T-cell (primary cell): ENCODE measurements at regions of chr3 and their contacts with region 1.

Region 1: DNA sequence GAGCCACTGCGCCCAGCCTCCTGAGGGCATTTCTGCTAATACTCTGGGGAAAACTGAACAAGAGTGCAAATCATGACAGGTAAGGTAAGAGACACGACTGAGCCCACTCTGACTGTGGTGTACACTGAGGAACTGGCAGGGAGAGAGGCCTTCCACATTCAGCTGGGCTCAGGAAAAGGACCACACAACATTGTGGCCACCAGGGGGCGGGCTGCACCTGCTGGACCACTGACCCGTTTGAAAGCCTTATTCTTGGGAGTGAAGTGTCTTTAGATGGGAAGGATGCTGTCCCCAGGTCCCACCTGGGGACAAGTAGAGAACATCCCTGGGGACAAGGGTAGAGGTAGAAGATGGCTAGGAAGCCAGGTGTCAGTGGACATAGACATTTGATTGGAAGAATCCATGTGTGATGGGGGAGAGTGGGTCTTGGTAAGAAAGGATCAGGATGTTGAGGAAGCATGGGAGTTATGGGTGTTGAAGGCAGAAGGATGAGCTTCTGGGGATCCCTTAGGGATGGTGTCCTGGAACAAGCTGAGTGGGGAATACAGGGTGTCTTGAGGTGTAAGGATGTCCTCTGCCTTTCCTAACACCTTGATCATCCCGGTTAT is 6.2 kb upstream of the CTDSPL start:
- DNase-seq: peak; percentile 13 to 80 (median 62)
- ATAC-seq: peak in 3 of 4 experiments; percentile 25 to 48 (median 35)
- H3K4me3 ChIP-seq: no peak overlapping the region
- H3K4me3 Mint-ChIP-seq: no peak overlapping the region
- H3K27ac ChIP-seq: no peak overlapping the region
- H3K27ac Mint-ChIP-seq: no peak overlapping the region
- H3K4me1 ChIP-seq: peaks cover 3 to 8% of the 10 kb centered on the region in 2 experiments
- H3K4me1 Mint-ChIP-seq: peaks cover 7 to 9% (median 9%) of the 10 kb centered on the region in 3 donors
- H3K27me3 ChIP-seq: peaks cover 0 to 21% of the 10 kb centered on the region in 2 experiments
- H3K27me3 Mint-ChIP-seq: no peaks in the 10 kb centered on the region

Region 2: GRCh38 chr3:37943631-37944309 is 88.3 kb after region 1 on chr3:
- CTCF ChIA-PET with region 1: interaction called in 1 of 2 experiments, 14 read pairs
- POLR2A ChIA-PET with region 1: no interaction called
- DNase-seq: no peak
- ATAC-seq: no peak
- H3K4me3 ChIP-seq: no peak overlapping the region
- H3K4me3 Mint-ChIP-seq: no peak overlapping the region
- H3K27ac ChIP-seq: no peak overlapping the region
- H3K27ac Mint-ChIP-seq: no peak overlapping the region
- H3K4me1 ChIP-seq: no peaks in the 10 kb centered on the region
- H3K4me1 Mint-ChIP-seq: peaks cover 0 to 6% (median 0%) of the 10 kb centered on the region in 3 donors
- H3K27me3 ChIP-seq: peaks cover 0 to 6% of the 10 kb centered on the region in 2 experiments
- H3K27me3 Mint-ChIP-seq: peaks cover 0 to 3% of the 10 kb centered on the region in 2 donors

Region 3: DNA sequence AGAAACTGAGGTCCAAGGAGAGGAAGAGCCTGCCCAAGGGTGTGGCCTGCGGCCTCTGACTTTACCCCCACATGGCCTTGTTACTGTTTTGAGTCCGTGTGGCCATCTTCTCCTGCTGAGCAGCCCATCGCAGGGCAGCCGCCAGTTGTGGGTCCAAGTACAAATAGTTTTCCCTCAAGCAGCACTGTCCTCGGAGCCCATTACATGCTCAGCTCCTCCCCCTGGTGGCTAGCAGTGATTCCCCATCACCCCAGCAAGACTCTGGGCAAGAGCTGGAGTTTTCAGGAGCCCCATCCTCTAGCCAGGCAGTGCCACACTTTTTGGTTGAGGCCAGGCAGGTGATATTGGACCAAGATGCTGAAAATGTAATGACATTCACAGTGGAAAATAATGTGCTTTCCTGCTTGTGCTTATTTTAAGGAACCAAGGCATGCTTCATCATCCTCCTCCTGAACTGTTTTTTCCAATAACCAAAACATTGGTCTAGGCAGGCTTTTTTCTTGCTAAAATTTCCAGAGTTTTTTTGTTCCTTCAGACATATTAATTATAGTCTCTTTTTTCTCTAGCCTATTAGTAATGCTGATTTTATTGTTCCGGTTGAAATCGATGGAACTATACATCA is 111.9 kb after region 1 on chr3:
- CTCF ChIA-PET with region 1: interaction called, 32 to 53 read pairs
- POLR2A ChIA-PET with region 1: no interaction called
- DNase-seq: peak in 34 of 35 experiments; percentile 11 to 72 (median 48)
- ATAC-seq: peak; percentile 70 to 83 (median 80)
- H3K4me3 ChIP-seq: no peak overlapping the region
- H3K4me3 Mint-ChIP-seq: no peak overlapping the region
- H3K27ac ChIP-seq: no peak overlapping the region
- H3K27ac Mint-ChIP-seq: no peak overlapping the region
- H3K4me1 ChIP-seq: peaks cover 0 to 3% of the 10 kb centered on the region in 2 experiments
- H3K4me1 Mint-ChIP-seq: peaks cover 4 to 7% (median 5%) of the 10 kb centered on the region in 3 donors
- H3K27me3 ChIP-seq: peaks cover 0 to 4% of the 10 kb centered on the region in 2 experiments
- H3K27me3 Mint-ChIP-seq: no peaks in the 10 kb centered on the region